ENCODE measurements at regions of chr4 and their contacts with region 1.

Region 1: DNA sequence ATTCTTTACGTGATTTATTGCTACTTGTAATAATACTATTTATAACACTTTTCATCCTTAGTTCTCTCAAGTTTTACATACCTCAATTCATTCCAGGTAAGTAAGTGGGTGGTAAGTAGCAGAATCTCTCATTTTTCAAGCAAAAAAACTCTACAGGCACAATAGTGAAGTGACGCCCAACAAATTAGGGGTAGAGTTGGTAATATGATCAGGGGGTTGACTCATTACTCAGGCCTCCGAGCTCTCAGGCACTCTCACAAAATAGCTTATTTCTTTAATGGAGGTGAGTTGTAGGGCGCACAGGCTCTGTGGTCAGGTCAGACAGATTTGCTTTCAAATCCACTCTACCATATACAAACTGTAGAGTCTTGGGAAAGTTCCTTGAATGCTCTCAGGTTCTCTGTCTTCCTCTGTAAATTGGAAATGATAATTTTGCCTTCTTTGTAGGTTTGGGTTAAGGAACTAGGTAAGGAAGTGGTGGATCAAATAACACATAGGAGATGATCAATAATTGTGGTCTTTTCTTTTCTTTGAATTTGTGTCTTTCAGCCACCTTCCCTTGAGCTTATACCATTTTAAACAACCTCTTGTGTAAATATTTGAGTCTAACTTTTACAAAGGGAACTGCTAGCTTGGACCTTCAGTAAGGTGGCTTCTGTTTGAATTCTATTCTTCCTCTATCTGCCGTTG is 134.9 kb upstream of the LEF1 start:
- DNase-seq: no peak
- H3K4me3 ChIP-seq: no peak overlapping the region
- CTCF ChIP-seq: no peak
- POLR2A ChIP-seq: no peak

Region 2: DNA sequence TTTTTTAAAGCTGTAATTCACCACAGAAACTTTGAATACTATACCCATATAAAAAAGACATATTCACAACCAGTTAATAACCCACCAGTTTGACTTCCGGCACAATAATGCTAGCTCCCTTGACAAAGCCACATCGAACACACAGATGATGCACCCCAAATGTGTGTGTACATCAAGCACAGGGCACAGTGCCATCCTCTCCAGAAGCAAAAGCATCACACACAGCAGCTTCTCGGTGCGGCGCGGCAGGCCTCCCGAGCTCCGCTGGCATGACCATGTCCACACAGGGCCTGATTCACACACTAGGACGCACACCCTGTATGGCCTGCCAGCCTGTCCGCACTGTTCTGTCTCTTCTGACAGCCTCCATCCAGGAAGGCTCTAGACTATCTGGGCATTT is 222.9 kb before region 1 on chr4:
- intact Hi-C with region 1: no loop called
- DNase-seq: no peak
- H3K4me3 ChIP-seq: no peak overlapping the region
- CTCF ChIP-seq: no peak
- POLR2A ChIP-seq: no peak

Region 3: GRCh38 chr4:108247387-108248049 is 56.1 kb before region 1 on chr4:
- intact Hi-C with region 1: loop called (anchors 1 kb)
- DNase-seq: no peak
- H3K4me3 ChIP-seq: no peak overlapping the region
- CTCF ChIP-seq: no peak
- POLR2A ChIP-seq: no peak